ENCODE measurements at regions of chr11 and their contacts with region 1.

Region 1: DNA sequence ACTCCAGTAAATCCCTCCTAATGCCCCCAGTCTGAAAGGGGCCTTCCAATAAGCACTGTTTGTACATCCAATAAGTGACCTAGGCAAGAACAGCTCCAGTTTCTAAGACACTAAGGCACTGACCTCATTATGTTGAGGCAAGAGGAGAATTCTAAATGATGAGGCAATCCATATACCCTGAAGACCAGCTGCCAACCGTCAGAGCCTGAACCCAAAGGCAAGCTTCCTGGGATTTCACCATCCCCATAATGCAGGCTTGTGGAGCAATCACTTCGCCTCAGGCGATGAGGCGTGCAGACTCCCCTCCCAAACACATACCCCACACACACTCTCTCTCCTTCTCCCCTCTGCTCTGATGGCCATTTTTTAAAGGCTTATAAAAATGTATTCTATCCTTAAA is 49.5 kb downstream of the LGR4 start:
- DNase-seq: no peak
- ATAC-seq: no peak
- H3K4me3 ChIP-seq: no peak overlapping the region
- H3K27ac ChIP-seq: no peak overlapping the region
- H3K4me1 ChIP-seq: peaks cover 6 to 40% of the 10 kb centered on the region in 2 experiments; a peak in 4 of 5 replicates
- H3K27me3 ChIP-seq: no peaks in the 10 kb centered on the region
- CTCF ChIP-seq: no peak
- EP300 ChIP-seq: no peak
- POLR2A ChIP-seq: no peak
- RAD21 ChIP-seq: no peak

Region 2: DNA sequence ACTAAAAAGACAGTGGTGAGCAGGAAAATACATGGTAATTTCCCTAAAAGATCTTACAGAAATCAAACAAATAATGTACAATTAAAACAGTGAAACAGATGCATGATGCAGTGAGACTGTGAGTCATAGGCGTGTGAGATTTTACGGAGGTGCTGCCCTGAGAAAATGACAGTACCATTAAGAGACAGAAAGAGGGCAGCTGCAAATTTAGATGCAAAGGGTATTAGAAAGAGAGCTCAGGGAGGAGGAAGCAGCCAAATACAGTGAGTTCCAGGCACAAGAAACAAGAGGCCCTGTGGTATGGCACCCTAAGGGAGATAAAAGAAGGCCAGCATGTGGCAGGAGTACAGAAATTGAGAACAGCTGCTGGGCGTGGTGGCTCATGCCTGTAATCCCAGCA is 517.8 kb before region 1 on chr11:
- CTCF ChIA-PET with region 1: no interaction called
- POLR2A ChIA-PET with region 1: no interaction called
- in situ Hi-C with region 1: no loop called
- intact Hi-C with region 1: no loop called
- DNase-seq: no peak
- ATAC-seq: no peak
- H3K4me3 ChIP-seq: no peak overlapping the region
- H3K27ac ChIP-seq: no peak overlapping the region
- H3K4me1 ChIP-seq: no peaks in the 10 kb centered on the region
- H3K27me3 ChIP-seq: no peaks in the 10 kb centered on the region
- CTCF ChIP-seq: no peak
- EP300 ChIP-seq: no peak
- POLR2A ChIP-seq: no peak
- RAD21 ChIP-seq: no peak

Region 3: GRCh38 chr11:27370374-27370773 is 52.8 kb before region 1 on chr11:
- CTCF ChIA-PET with region 1: no interaction called
- POLR2A ChIA-PET with region 1: interaction called, 3 read pairs
- in situ Hi-C with region 1: loop called (anchors 5 kb)
- intact Hi-C with region 1: loop called (anchors 1 kb)
- DNase-seq: peak in 2 of 4 experiments; percentile 10 to 42
- ATAC-seq: peak; percentile 57; the same call in 2 of the 3 replicates
- H3K4me3 ChIP-seq: no peak overlapping the region
- H3K27ac ChIP-seq: no peak overlapping the region
- H3K4me1 ChIP-seq: peaks cover 14 to 34% of the 10 kb centered on the region in 2 experiments; a peak in 4 of 5 replicates
- H3K27me3 ChIP-seq: no peaks in the 10 kb centered on the region
- CTCF ChIP-seq: no peak
- EP300 ChIP-seq: no peak
- POLR2A ChIP-seq: no peak
- RAD21 ChIP-seq: no peak

Region 4: DNA sequence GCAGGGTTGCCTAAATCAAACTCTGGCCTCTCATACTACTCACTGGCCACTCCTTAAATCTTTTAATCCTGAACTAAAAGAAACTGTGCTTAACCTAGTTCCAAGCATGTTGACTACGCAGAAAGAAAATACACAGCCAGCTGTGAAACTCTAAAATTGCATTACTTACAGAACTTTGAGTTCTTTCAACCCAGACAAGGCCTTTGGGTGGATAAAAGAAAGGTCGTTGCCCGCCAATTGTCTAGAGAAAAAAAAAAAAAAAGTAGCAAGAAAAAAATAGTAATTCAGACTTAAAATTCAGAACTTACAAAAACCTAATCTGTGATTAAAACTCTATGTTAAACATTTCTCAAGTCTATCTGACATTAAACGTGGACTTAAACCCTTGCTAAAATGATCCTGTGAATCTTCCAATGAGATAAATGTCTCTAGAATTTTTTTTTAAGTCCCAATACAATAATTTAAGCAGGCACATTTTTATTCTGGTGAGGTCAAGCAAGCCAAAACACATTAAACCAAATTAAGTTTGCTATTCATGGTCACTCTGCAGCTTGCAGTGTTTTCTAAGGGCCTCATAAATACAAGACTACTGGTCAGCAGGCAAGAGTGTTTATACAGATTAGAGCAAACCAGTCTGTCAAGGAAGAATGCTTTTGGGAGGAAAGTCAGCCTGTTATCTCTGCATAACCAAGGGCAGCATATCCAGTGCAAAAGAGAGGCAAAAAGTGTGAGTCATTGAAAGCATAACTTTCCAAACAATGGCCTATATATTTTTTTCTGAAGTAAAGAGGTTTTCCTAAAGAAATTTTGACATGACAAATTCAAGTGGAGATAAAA is 30.6 kb before region 1 on chr11:
- CTCF ChIA-PET with region 1: no interaction called
- POLR2A ChIA-PET with region 1: interaction called, 4 read pairs
- in situ Hi-C with region 1: no loop called
- intact Hi-C with region 1: loop called (anchors 2 kb)
- DNase-seq: peak; percentile 28 to 89 (median 54)
- ATAC-seq: peak; percentile 89
- H3K4me3 ChIP-seq: no peak overlapping the region
- H3K27ac ChIP-seq: peak overlapping the region; percentile 40; the same call in 1 of the 3 replicates
- H3K4me1 ChIP-seq: peaks cover 5 to 51% of the 10 kb centered on the region in 2 experiments
- H3K27me3 ChIP-seq: no peaks in the 10 kb centered on the region
- CTCF ChIP-seq: no peak
- EP300 ChIP-seq: peak; percentile 90
- POLR2A ChIP-seq: no peak
- RAD21 ChIP-seq: no peak

Region 5: GRCh38 chr11:27412192-27412691 is 10.9 kb before region 1 on chr11:
- CTCF ChIA-PET with region 1: no interaction called
- POLR2A ChIA-PET with region 1: interaction called, 11 read pairs
- in situ Hi-C with region 1: no loop called
- intact Hi-C with region 1: no loop called
- DNase-seq: peak in 2 of 4 experiments; percentile 22 to 45
- ATAC-seq: peak; percentile 24
- H3K4me3 ChIP-seq: no peak overlapping the region
- H3K27ac ChIP-seq: no peak overlapping the region
- H3K4me1 ChIP-seq: peaks cover 0 to 56% of the 10 kb centered on the region in 2 experiments; a peak in 4 of 5 replicates
- H3K27me3 ChIP-seq: no peaks in the 10 kb centered on the region
- CTCF ChIP-seq: no peak
- EP300 ChIP-seq: no peak
- POLR2A ChIP-seq: no peak
- RAD21 ChIP-seq: no peak

Region 6: GRCh38 chr11:27506200-27507182 is 83.4 kb after region 1 on chr11 and contains the start of gene LIN7C:
- CTCF ChIA-PET with region 1: no interaction called
- POLR2A ChIA-PET with region 1: no interaction called
- in situ Hi-C with region 1: no loop called
- intact Hi-C with region 1: no loop called
- DNase-seq: peak; percentile 95 to 99 (median 96)
- ATAC-seq: peak; percentile 93
- H3K4me3 ChIP-seq: peak within 1 kb of the TSS; percentile 68
- H3K27ac ChIP-seq: peak within 1 kb of the TSS; percentile 98
- H3K4me1 ChIP-seq: peaks cover 7 to 9% of the 10 kb centered on the region in 2 experiments
- H3K27me3 ChIP-seq: no peaks in the 10 kb centered on the region
- CTCF ChIP-seq: peak; percentile 5 to 27 (median 13); a peak in 1 of 6 replicates
- EP300 ChIP-seq: peak; percentile 14; the same call in 1 of the 2 replicates
- POLR2A ChIP-seq: peak; percentile 98
- RAD21 ChIP-seq: no peak
- polyA plus RNA-seq, gene LIN7C: 20.0 to 48.1 TPM

Region 7: GRCh38 chr11:27545946-27546345 is 122.8 kb after region 1 on chr11:
- CTCF ChIA-PET with region 1: no interaction called
- POLR2A ChIA-PET with region 1: no interaction called
- in situ Hi-C with region 1: no loop called
- intact Hi-C with region 1: no loop called
- DNase-seq: no peak
- ATAC-seq: no peak
- H3K4me3 ChIP-seq: no peak overlapping the region
- H3K27ac ChIP-seq: no peak overlapping the region
- H3K4me1 ChIP-seq: no peaks in the 10 kb centered on the region
- H3K27me3 ChIP-seq: no peaks in the 10 kb centered on the region
- CTCF ChIP-seq: no peak
- EP300 ChIP-seq: no peak
- POLR2A ChIP-seq: no peak
- RAD21 ChIP-seq: no peak

Measured in K562 (cell line).